Ascending aorta (tissue), 2 donors: ENCODE measurements at regions of chrX and their contacts with region 1.

Region 1: GRCh38 chrX:120137439-120137838 is 21.0 kb upstream of the RHOXF2 start:
- DNase-seq: no peak
- H3K4me3 ChIP-seq: no peak overlapping the region
- H3K27ac ChIP-seq: no peak overlapping the region
- H3K4me1 ChIP-seq: no peaks in the 10 kb centered on the region
- H3K27me3 ChIP-seq: no peaks in the 10 kb centered on the region
- CTCF ChIP-seq: no peak

Region 2: DNA sequence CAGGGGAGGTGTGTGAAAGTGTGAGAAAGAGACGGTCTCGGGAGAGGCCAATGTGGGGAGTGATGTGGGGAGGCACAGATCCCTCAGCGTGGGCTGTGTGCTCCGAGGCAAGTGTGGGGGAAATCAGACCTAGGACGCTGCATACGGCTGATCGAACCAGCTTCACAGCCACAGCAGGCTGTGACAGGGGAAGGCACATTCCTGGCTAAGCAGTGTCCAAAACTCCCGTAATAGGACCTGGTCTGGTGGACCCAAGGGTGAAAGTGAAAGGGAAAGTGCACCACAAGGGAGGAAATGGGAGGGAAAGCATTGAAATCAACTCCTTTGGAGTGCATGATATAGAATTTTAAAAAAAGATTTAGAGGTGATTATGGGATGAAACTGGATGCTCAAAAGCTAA is 10.1 kb after region 1 on chrX:
- intact Hi-C with region 1: no loop called
- DNase-seq: no peak
- H3K4me3 ChIP-seq: no peak overlapping the region
- H3K27ac ChIP-seq: no peak overlapping the region
- H3K4me1 ChIP-seq: no peaks in the 10 kb centered on the region
- H3K27me3 ChIP-seq: no peaks in the 10 kb centered on the region
- CTCF ChIP-seq: no peak

Region 3: GRCh38 chrX:120213436-120214265 is 76.2 kb after region 1 on chrX:
- intact Hi-C with region 1: loop called (anchors 10 kb)
- DNase-seq: no peak
- H3K4me3 ChIP-seq: no peak overlapping the region
- H3K27ac ChIP-seq: no peak overlapping the region
- H3K4me1 ChIP-seq: no peaks in the 10 kb centered on the region
- H3K27me3 ChIP-seq: no peaks in the 10 kb centered on the region
- CTCF ChIP-seq: peak; percentile 25 to 75 (median 68)

Region 4: GRCh38 chrX:120262859-120263708 is 125.6 kb after region 1 on chrX:
- intact Hi-C with region 1: no loop called
- DNase-seq: no peak
- H3K4me3 ChIP-seq: no peak overlapping the region
- H3K27ac ChIP-seq: no peak overlapping the region
- H3K4me1 ChIP-seq: no peaks in the 10 kb centered on the region
- H3K27me3 ChIP-seq: no peaks in the 10 kb centered on the region
- CTCF ChIP-seq: no peak